Activated CD4-positive, alpha-beta T cell treated with anti-CD3 and anti-CD28 coated beads, Interleukin-2, amount 10 ng/mL, durations not matched to agents 24 days and 14 days (primary cell): ENCODE measurements at regions of chrX and their contacts with region 1.

Region 1: GRCh38 chrX:136616987-136617685 is 30.8 kb upstream of the CD40LG start:
- DNase-seq: peak; percentile 77
- H3K4me3 Mint-ChIP-seq: peak overlapping the region; percentile 41
- H3K27ac Mint-ChIP-seq: peak overlapping the region; percentile 88
- H3K4me1 Mint-ChIP-seq: peaks cover 46% of the 10 kb centered on the region
- H3K27me3 Mint-ChIP-seq: no peaks in the 10 kb centered on the region

Region 2: GRCh38 chrX:135697601-135698000 is 919.5 kb before region 1 on chrX:
- intact Hi-C with region 1: no loop called
- DNase-seq: no peak
- H3K4me3 Mint-ChIP-seq: no peak overlapping the region
- H3K27ac Mint-ChIP-seq: no peak overlapping the region
- H3K4me1 Mint-ChIP-seq: no peaks in the 10 kb centered on the region
- H3K27me3 Mint-ChIP-seq: no peaks in the 10 kb centered on the region

Region 3: DNA sequence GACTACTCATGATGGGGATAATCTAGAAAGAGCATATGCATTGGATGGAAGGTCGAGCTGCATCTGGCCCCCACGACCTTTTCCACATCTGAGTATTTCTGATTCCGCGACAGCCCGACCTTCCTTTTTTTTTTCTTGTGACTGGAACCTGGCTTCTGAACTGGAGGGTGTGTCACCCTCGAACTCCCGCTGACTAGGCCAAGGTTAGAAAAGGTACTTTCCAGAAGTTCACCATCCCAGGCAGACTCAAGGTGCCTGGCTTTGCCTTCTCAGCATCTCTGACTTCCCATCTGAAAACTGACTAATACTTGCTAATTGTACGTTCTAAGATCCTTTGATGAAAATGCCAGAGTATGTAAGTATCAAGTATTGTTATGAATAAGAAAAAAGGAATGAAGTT is 18.5 kb before region 1 on chrX:
- intact Hi-C with region 1: loop called (anchors 2 kb)
- DNase-seq: peak; percentile 71
- H3K4me3 Mint-ChIP-seq: peak overlapping the region; percentile 58
- H3K27ac Mint-ChIP-seq: peak overlapping the region; percentile 85
- H3K4me1 Mint-ChIP-seq: peaks cover 37% of the 10 kb centered on the region
- H3K27me3 Mint-ChIP-seq: no peaks in the 10 kb centered on the region

Region 4: GRCh38 chrX:136627409-136627808 is 10.3 kb after region 1 on chrX:
- intact Hi-C with region 1: loop called (anchors 1 kb)
- DNase-seq: peak; percentile 79
- H3K4me3 Mint-ChIP-seq: peak overlapping the region; percentile 57
- H3K27ac Mint-ChIP-seq: peak overlapping the region; percentile 96
- H3K4me1 Mint-ChIP-seq: peaks cover 75% of the 10 kb centered on the region
- H3K27me3 Mint-ChIP-seq: no peaks in the 10 kb centered on the region